ENCODE measurements at regions of chr7 and their contacts with region 1.

Region 1: DNA sequence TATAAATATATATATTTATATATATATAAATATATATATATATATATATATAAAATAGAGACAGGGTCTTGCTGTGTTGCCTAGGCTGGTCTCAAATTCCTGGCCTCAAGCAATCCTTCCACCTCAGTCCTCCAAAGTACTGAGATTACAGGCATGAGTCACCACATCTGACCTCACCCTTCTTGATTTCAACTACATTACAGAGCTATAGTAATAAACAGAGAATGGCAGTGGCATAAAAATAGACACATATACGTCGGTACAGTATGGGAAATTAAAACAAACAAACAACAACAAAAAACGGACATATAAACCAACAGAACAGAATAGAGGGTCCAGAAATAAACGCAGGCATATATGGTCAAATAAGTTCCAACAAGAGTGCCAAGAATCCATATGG is 77.6 kb upstream of the PPP1R3A start:
- DNase-seq: no peak
- H3K4me3 ChIP-seq: no peak overlapping the region
- CTCF ChIP-seq: no peak

Region 2: GRCh38 chr7:113912876-113913275 is 83.5 kb before region 1 on chr7:
- in situ Hi-C with region 1: loop called (anchors 5 kb)
- DNase-seq: no peak
- H3K4me3 ChIP-seq: no peak overlapping the region
- CTCF ChIP-seq: no peak

Region 3: GRCh38 chr7:113955157-113955556 is 41.2 kb before region 1 on chr7:
- in situ Hi-C with region 1: no loop called
- DNase-seq: no peak
- H3K4me3 ChIP-seq: no peak overlapping the region
- CTCF ChIP-seq: no peak

Measured in astrocyte of the cerebellum (primary cell).